SK-N-SH (cell line): ENCODE measurements at regions of chr1 and their contacts with region 1.

Region 1: GRCh38 chr1:155193275-155193990 is 14.3 kb downstream of the THBS3 start:
- DNase-seq: peak; percentile 94
- H3K4me3 ChIP-seq: peak overlapping the region; percentile 30 to 60
- H3K27ac ChIP-seq: peak overlapping the region; percentile 78 to 86
- H3K4me1 ChIP-seq: peaks cover 0 to 24% of the 10 kb centered on the region in 2 experiments; a peak in 2 of 4 replicates
- H3K27me3 ChIP-seq: no peaks in the 10 kb centered on the region
- CTCF ChIP-seq: peak; percentile 97
- EP300 ChIP-seq: no peak
- RAD21 ChIP-seq: peak; percentile 64

Region 2: GRCh38 chr1:155227261-155228095 is 34.0 kb after region 1 on chr1:
- CTCF ChIA-PET with region 1: interaction called, 12 read pairs
- POLR2A ChIA-PET with region 1: interaction called, 4 read pairs
- DNase-seq: peak; percentile 97
- H3K4me3 ChIP-seq: peak overlapping the region; percentile 60 to 69
- H3K27ac ChIP-seq: peak overlapping the region; percentile 86 to 93
- H3K4me1 ChIP-seq: peaks cover 12 to 14% of the 10 kb centered on the region in 2 experiments; a peak in 3 of 4 replicates
- H3K27me3 ChIP-seq: no peaks in the 10 kb centered on the region
- CTCF ChIP-seq: no peak
- EP300 ChIP-seq: no peak
- RAD21 ChIP-seq: no peak

Region 3: GRCh38 chr1:155285063-155285462 is 91.6 kb after region 1 on chr1:
- CTCF ChIA-PET with region 1: no interaction called
- POLR2A ChIA-PET with region 1: no interaction called
- DNase-seq: no peak
- H3K4me3 ChIP-seq: no peak overlapping the region
- H3K27ac ChIP-seq: no peak overlapping the region
- H3K4me1 ChIP-seq: no peaks in the 10 kb centered on the region
- H3K27me3 ChIP-seq: no peaks in the 10 kb centered on the region
- CTCF ChIP-seq: no peak
- EP300 ChIP-seq: no peak
- RAD21 ChIP-seq: no peak

Region 4: DNA sequence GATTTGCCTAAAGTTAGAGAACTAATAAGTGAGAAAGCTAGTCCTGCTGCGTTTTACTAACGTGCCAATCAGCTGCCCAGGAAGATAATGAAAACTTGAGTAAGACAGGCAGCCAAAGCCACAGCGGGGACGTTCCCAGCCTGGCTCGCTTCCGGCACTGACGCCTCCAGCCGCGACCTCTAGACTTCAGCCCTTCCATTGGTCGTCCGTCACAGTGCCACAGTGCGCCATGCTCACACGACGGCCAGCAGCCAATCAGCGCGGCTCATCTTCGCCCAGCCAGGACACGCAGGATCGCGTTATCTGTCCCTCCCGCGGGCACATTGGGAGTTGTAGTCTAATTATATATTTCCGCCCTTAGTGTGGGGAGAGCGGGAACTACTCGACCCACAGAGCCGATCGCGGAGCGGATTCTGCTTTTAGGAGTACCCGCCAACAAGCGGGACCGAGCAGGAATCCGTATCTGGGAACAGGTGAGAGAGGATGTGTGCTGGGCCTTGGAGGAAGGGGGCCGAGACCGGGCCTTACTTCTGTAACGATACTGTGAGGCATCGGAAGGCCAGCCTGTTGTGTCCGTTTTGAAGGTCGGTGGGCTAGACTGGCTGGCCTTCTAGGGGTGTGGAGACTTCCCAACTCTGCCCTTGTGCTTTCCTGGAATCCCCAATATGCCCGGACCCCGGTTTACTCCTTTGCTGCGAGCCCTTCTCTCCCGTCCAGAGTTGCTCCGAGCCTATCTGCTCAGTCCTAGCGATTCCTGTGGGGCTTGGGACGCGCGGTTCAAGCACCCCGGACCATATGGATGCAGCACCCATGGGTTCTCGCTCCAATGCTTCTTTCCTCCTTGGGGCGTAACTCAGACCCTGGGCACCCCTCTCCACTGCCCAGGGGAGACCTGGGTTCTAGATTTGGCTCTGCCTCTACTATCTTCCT is 115.3 kb after region 1 on chr1 and contains the start of gene FDPS:
- CTCF ChIA-PET with region 1: no interaction called
- POLR2A ChIA-PET with region 1: no interaction called
- DNase-seq: peak; percentile 94
- H3K4me3 ChIP-seq: peak within 1 kb of the TSS; percentile 74 to 76
- H3K27ac ChIP-seq: peak within 1 kb of the TSS; percentile 79 to 92
- H3K4me1 ChIP-seq: peaks cover 0 to 10% of the 10 kb centered on the region in 2 experiments; a peak in 1 of 4 replicates
- H3K27me3 ChIP-seq: no peaks in the 10 kb centered on the region
- CTCF ChIP-seq: no peak
- EP300 ChIP-seq: no peak
- RAD21 ChIP-seq: no peak
- polyA plus RNA-seq, gene FDPS: 126 and 142 TPM in 2 replicates